Dendritic cell treated with granulocyte-macrophage colony-stimulating factor and Interleukin-4, amounts not matched to agents 40 ng/mL and 50 ng/mL, for 4 days (primary cell): ENCODE measurements at regions of chr7 and their contacts with region 1.

Region 1: DNA sequence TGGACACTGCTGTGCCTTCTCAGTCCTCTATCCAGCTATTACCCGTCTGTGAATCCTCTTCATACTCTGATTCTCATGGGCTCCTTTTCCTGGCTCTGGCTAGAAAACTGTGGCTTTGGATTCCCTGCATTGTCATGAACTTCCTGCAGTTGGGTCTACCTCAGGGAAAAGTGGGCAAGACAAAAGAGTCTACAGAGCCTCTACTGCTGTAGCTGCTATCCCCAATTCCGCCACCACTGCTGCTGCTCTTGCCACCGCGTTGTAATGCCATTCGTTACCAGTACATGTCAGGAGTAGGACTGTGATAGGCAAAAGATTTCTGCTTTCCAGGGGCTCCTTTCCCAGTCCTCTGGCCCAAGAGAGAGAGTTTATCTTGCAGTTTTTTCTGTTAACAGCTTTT is 23.9 kb upstream of the PPP1R17 start:
- H3K4me3 Mint-ChIP-seq: no peak overlapping the region
- H3K27ac Mint-ChIP-seq: no peak overlapping the region
- H3K4me1 Mint-ChIP-seq: peaks cover 26% of the 10 kb centered on the region
- H3K27me3 Mint-ChIP-seq: peaks cover 10% of the 10 kb centered on the region

Region 2: DNA sequence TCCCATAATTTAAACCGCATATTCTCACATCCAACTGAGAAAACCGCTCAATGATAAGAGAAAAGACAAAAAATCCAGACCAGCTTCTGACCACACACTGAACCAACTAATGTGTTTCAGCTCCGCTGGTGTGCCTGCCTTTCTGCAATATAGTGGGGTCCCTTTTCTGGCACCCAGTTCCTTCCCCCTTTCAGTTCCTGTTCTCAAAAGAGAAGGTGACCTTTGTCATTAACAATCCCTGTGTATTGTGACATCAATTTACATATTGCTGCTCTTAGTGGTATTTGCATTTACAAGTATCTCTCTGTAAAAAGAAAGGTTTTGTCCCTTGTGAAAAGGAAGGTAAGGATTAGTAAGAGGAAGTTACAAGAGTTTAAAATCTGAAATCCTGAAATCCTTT is 25.3 kb after region 1 on chr7:
- intact Hi-C with region 1: no loop called
- H3K4me3 Mint-ChIP-seq: peak overlapping the region; percentile 26
- H3K27ac Mint-ChIP-seq: peak overlapping the region; percentile 30
- H3K4me1 Mint-ChIP-seq: peaks cover 44% of the 10 kb centered on the region
- H3K27me3 Mint-ChIP-seq: peaks cover 8% of the 10 kb centered on the region

Region 3: GRCh38 chr7:31883761-31884164 is 220.7 kb after region 1 on chr7:
- intact Hi-C with region 1: loop called (anchors 10 kb)
- H3K4me3 Mint-ChIP-seq: no peak overlapping the region
- H3K27ac Mint-ChIP-seq: peak overlapping the region; percentile 51
- H3K4me1 Mint-ChIP-seq: peaks cover 17% of the 10 kb centered on the region
- H3K27me3 Mint-ChIP-seq: peaks cover 2% of the 10 kb centered on the region